Posterior cingulate gyrus (tissue), 11 donors: ENCODE measurements at regions of chr5 and their contacts with region 1.

Region 1: DNA sequence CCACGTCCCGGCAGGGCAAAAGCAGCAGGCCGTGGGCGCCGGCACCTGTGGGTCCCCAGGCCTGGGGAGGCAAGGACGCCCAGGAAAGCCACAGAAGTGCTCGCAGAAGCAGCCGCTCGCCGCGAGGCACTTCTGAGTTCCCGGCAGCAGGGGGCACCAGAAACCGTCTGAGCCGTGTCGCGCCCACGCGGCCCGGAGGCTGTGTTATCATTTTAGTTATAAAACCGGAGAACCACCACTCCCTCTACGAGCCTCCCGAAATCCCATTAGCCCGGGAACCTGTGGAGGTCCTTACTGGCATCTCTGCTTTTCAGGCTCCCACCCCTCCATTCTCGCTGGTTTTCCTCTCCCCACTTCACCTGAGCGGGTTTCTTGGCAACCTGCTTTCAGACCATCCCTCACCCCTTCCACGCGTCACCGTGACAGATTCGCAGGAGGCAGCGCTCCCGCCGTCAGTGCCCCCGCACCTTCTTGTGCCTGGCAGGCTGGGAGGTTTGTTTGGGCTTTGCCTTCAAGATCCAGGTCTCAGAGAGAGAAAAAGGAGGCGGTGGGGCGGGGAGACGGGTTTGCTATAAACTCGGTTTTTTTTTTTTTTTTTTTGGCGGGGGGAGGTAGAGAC is 2.3 kb downstream of the GDNF start:
- DNase-seq: peak; percentile 62 to 97 (median 82)

Region 2: DNA sequence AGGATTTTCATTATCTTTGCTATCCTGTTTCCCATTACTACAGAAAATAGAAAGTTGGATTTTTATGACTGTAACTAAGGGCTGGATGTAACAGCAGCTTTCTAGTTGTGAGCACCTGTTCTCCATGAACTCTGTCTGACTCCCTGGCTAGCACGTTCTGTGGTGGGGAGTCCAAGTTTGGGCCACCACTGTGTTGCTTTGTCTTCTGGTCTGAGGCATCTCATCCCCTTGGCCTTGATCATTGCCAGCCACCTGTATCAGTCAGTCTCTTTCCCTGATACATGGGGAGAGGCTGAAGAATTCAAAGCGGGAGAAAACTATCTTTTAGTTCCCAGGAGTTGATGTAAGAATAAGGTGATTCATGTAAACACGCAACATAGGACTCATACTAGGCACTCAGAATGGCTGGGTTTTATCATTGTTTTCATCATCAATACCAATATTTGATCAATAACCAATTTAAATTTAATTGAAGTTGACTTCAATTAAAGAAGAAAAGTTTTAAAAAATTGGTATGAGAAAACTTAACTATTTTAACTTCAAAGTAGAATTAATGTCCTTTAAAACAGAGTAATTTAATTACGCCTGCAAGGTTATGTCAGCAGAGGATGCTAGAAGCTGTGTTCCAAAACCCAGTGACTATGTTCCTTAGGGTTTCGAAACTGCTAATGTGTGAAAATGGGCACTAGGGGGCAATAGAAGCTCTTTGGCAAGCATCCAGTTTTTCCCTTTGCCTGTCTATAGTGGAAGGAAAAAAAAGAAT is 424.8 kb before region 1 on chr5:
- intact Hi-C with region 1: loop called (anchors 2 kb)
- DNase-seq: peak in 4 of 10 donors; percentile 37 to 52 (median 42)

Region 3: GRCh38 chr5:37722236-37723146 is 115.0 kb before region 1 on chr5:
- intact Hi-C with region 1: loop called (anchors 5 kb)
- DNase-seq: no peak

Region 4: GRCh38 chr5:37767961-37768360 is 69.6 kb before region 1 on chr5:
- intact Hi-C with region 1: loop called (anchors 5 kb)
- DNase-seq: peak in 3 of 10 donors; percentile 40 to 80 (median 42)

Region 5: DNA sequence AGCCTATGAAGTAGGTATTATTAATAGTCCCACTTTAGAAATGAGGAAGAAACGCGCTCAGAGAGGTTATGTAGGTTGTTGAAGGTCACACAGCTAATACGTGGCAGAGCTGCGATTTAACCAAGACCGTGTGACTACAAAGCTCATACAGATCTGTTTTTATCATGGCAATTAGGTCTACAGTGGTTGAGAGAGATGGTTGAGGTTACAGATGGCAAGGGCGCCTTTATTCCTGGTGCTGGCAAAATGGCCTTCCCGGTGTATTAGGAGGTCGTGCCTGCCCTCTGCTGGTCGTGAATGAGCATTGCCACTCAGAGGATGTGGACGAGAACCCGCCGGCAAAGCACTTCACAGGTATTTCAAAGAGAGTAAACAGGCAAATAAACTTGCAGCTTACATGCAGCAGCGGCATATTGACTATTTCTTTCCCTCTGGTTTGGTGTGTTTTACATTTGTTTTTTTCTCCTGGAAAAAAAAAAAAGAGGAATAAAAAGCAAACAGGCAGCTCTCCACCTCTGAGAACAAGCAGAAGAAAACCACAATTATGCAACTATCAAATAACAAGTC is 355.6 kb after region 1 on chr5:
- intact Hi-C with region 1: loop called (anchors 1 kb)
- DNase-seq: peak; percentile 38 to 96 (median 79)